ENCODE measurements at regions of chr10 and their contacts with region 1.

Region 1: DNA sequence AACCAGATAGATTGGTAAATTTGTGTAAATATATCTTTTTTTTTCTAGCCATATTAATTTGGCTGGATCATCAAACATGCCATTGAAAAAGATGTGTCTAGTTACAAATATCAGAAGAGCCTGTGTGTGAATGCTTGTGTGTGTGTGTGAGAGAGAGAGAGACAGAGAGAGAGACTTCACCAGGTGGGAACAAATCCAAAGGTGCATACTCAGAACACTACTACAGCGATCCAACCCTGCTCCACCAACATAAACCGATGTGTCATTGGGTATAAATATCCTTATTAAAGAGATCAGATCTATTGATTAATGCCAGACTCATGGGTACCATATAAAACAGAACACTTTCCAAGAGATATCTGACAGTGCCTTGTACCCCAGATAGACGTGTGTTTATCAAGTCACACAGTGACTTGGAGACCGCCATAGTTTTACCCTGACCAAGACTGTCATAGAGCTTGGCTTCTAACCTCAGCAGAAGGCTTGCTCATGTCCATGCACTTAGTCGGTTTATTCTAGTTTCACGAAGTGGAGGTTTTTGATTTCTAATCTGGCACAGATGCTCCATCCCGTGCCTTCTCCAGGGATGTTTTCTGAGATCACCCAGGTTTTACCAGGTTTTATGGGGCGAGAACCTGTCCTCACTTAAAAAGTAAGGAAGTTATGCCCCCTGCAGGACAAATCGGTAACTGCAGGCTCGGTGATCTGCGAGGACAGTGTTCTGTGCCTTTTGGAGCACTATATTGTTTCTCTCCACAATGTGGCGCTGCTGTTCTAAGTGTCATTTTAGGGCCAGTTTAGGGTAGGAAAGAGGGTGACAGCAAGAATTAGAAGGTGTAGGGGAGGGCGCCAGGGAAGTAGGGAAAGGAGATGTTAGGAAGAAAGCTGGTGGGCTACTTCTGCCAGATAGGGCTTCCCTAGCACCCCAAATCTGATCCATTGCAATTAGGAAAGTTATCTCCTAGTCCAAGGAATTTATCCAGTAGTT is 29.3 kb upstream of the WNT8B start:
- DNase-seq: peak; percentile 75 to 90
- ATAC-seq: peak; percentile 89 to 97
- H3K4me3 ChIP-seq: no peak overlapping the region
- H3K27ac ChIP-seq: no peak overlapping the region
- H3K4me1 ChIP-seq: peaks cover 4 to 7% of the 10 kb centered on the region in 2 donors
- H3K27me3 ChIP-seq: no peaks in the 10 kb centered on the region
- CTCF ChIP-seq: peak; percentile 98 to 99 (median 99)
- POLR2A ChIP-seq: no peak

Region 2: GRCh38 chr10:100338434-100339036 is 95.0 kb before region 1 on chr10:
- in situ Hi-C with region 1: loop called (anchors 5 kb)
- intact Hi-C with region 1: loop called (anchors 1 kb)
- DNase-seq: peak; percentile 50 to 71
- ATAC-seq: peak; percentile 25 to 40
- H3K4me3 ChIP-seq: no peak overlapping the region
- H3K27ac ChIP-seq: no peak overlapping the region
- H3K4me1 ChIP-seq: peaks cover 20% of the 10 kb centered on the region in 2 donors
- H3K27me3 ChIP-seq: no peaks in the 10 kb centered on the region
- CTCF ChIP-seq: peak; percentile 90 to 96 (median 94)
- POLR2A ChIP-seq: no peak

Region 3: GRCh38 chr10:100391163-100392002 is 42.2 kb before region 1 on chr10:
- in situ Hi-C with region 1: no loop called
- intact Hi-C with region 1: no loop called
- DNase-seq: no peak
- ATAC-seq: no peak
- H3K4me3 ChIP-seq: no peak overlapping the region
- H3K27ac ChIP-seq: no peak overlapping the region
- H3K4me1 ChIP-seq: no peaks in the 10 kb centered on the region
- H3K27me3 ChIP-seq: no peaks in the 10 kb centered on the region
- CTCF ChIP-seq: no peak
- POLR2A ChIP-seq: no peak

Region 4: DNA sequence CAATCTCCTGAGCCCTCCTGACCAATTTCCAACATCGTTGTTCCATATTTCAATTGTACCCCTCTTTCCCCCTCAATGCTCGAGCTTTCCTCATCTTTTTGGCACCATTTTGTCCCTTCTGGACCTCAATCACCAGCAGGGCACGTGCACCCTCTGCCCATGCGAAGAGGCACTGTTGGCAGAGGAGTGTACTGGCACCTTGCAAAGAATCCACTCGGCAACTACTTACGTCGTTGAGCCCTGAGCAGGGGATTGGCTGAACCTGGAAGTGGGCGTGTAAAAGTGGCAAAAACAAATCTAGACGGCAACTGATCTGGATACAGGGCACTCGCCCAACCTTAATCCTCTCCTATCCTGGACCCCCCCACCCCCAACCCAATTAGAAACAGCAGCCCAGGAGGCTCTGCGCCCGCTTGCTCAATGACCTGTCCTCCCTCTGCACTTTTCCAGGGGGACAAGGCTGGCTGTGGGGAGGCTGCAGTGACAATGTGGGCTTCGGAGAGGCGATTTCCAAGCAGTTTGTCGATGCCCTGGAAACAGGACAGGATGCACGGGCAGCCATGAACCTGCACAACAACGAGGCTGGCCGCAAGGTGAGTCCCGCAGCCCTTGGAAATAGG is 48.0 kb after region 1 on chr10:
- in situ Hi-C with region 1: no loop called
- intact Hi-C with region 1: loop called (anchors 2 kb)
- DNase-seq: peak; percentile 70 to 83
- ATAC-seq: peak; percentile 98
- H3K4me3 ChIP-seq: peak overlapping the region; percentile 48 to 70 (median 57)
- H3K27ac ChIP-seq: no peak overlapping the region
- H3K4me1 ChIP-seq: peaks cover 7 to 14% of the 10 kb centered on the region in 2 donors
- H3K27me3 ChIP-seq: peaks cover 3 to 23% (median 19%) of the 10 kb centered on the region in 3 donors
- CTCF ChIP-seq: no peak
- POLR2A ChIP-seq: no peak